ENCODE measurements at regions of chrX and their contacts with region 1.

Region 1: DNA sequence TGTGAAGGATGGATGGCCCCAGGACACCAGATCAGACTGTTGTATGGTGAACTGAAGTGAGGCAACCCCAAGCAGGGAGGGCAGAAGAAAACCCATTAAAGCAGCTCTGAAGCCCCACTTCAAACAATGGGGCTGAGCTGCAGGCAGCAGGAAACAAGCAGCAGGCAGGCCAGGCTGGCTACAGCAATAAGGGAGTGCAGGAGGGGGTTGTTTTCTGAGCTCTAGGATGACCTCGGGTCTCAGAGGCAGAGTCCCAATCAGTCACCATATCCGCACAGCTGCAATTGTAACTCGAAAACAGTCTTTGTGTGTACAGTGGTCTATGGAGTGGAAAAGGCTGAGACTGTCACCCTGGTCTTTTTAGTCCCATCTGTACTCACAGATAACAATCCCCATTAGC is 90.4 kb downstream of the COL4A6 start:
- DNase-seq: no peak
- H3K4me3 ChIP-seq: no peak overlapping the region
- H3K27ac ChIP-seq: no peak overlapping the region
- H3K4me1 ChIP-seq: no peaks in the 10 kb centered on the region
- H3K27me3 ChIP-seq: peaks cover 0 to 25% of the 10 kb centered on the region in 2 donors
- CTCF ChIP-seq: no peak
- POLR2A ChIP-seq: no peak

Region 2: DNA sequence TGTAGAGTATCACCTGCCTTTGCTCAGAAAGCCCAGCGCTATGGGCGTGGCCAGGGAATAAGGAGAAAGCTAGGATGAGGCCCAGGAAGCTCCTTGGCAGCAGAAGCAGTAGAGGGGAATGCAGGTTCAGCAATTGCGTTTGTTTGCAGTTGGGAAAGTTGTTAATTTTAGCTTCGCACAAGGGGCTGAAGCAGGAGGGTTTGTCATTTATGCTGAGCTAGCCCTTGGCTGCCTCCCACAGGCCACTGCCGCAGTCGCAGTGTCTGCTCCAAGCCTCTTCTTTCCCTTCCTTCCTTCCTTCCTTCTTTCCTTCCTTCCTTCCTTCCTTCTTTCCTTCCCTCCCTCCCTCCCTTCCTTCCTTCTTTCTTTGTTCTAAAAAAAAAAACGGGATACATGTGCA is 876.8 kb before region 1 on chrX:
- intact Hi-C with region 1: loop called (anchors 5 kb)
- DNase-seq: no peak
- H3K4me3 ChIP-seq: no peak overlapping the region
- H3K27ac ChIP-seq: no peak overlapping the region
- H3K4me1 ChIP-seq: no peaks in the 10 kb centered on the region
- H3K27me3 ChIP-seq: peaks cover 0 to 50% of the 10 kb centered on the region in 2 donors
- CTCF ChIP-seq: no peak
- POLR2A ChIP-seq: no peak

Region 3: DNA sequence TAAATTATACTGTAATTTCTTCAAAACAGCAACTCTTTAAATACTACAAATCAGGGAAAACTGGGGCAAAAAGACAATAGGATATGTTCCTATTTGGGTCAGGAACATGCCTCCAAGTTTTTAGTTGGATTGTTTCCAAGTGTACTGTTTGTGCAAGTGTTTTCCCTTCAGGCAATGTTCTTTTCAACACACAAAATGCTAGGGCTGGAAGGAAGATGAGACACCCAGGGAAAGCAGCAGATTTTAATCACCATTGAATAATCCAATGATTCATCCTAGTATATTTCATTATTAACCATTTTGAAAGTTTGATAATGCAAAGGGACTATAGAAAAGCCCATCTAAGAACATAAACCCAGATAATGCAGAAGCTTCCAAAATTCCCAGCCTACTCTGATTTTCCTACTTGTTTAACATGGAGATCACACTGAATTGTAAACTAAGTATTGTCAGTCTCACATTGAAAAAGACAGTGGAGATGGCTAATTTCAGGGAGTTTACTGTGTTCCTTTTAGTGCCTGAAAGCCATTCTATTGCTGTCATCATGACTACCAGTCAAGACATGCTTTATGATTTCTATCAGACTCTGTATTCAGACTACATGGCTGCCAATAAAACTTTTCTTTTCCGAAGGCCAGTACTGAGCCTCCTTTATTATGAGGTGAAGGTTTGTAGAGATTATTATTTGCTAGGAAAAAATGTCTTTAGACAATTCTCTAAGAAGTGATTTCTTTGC is 51.8 kb after region 1 on chrX:
- intact Hi-C with region 1: no loop called
- DNase-seq: no peak
- H3K4me3 ChIP-seq: no peak overlapping the region
- H3K27ac ChIP-seq: peak overlapping the region in 1 of 2 donors; percentile 48
- H3K4me1 ChIP-seq: no peaks in the 10 kb centered on the region
- H3K27me3 ChIP-seq: peaks cover 0 to 34% of the 10 kb centered on the region in 2 donors
- CTCF ChIP-seq: no peak
- POLR2A ChIP-seq: no peak

Measured in breast epithelium (tissue), 4 donors.